Caco-2 (cell line): ENCODE measurements at regions of chr1 and their contacts with region 1.

Region 1: GRCh38 chr1:214551436-214552173 is at the start of gene PTPN14:
- DNase-seq: peak; percentile 96
- H3K4me3 ChIP-seq: peak within 1 kb of the TSS; percentile 94
- H3K4me3 Mint-ChIP-seq: peak within 1 kb of the TSS; percentile 81
- H3K27ac Mint-ChIP-seq: peak within 1 kb of the TSS; percentile 97
- H3K4me1 ChIP-seq: peaks cover 50% of the 10 kb centered on the region
- H3K4me1 Mint-ChIP-seq: peaks cover 36% of the 10 kb centered on the region
- H3K27me3 ChIP-seq: no peaks in the 10 kb centered on the region
- H3K27me3 Mint-ChIP-seq: no peaks in the 10 kb centered on the region
- CTCF ChIP-seq: peak; percentile 36 to 50
- total RNA-seq, gene PTPN14: 103 and 108 TPM in 2 replicates

Region 2: GRCh38 chr1:214281021-214281719 is 270.4 kb before region 1 on chr1 and contains the start of gene SMYD2:
- CTCF ChIA-PET with region 1: no interaction called
- POLR2A ChIA-PET with region 1: no interaction called
- intact Hi-C with region 1: loop called (anchors 5 kb)
- DNase-seq: peak; percentile 82 to 87
- H3K4me3 ChIP-seq: peak within 1 kb of the TSS; percentile 89
- H3K4me3 Mint-ChIP-seq: peak within 1 kb of the TSS; percentile 94
- H3K27ac Mint-ChIP-seq: peak within 1 kb of the TSS; percentile 94
- H3K4me1 ChIP-seq: peaks cover 69% of the 10 kb centered on the region
- H3K4me1 Mint-ChIP-seq: peaks cover 53% of the 10 kb centered on the region
- H3K27me3 ChIP-seq: no peaks in the 10 kb centered on the region
- H3K27me3 Mint-ChIP-seq: no peaks in the 10 kb centered on the region
- CTCF ChIP-seq: no peak
- total RNA-seq, gene SMYD2: 161 and 182 TPM in 2 replicates

Region 3: GRCh38 chr1:214349781-214350180 is 201.8 kb before region 1 on chr1:
- CTCF ChIA-PET with region 1: interaction called, 3 read pairs
- POLR2A ChIA-PET with region 1: interaction called, 19 read pairs
- intact Hi-C with region 1: loop called (anchors 1 kb)
- DNase-seq: peak; percentile 82 to 88
- H3K4me3 ChIP-seq: no peak overlapping the region
- H3K4me3 Mint-ChIP-seq: peak overlapping the region; percentile 70
- H3K27ac Mint-ChIP-seq: peak overlapping the region; percentile 97
- H3K4me1 ChIP-seq: peaks cover 46% of the 10 kb centered on the region
- H3K4me1 Mint-ChIP-seq: peaks cover 33% of the 10 kb centered on the region
- H3K27me3 ChIP-seq: no peaks in the 10 kb centered on the region
- H3K27me3 Mint-ChIP-seq: no peaks in the 10 kb centered on the region
- CTCF ChIP-seq: no peak

Region 4: GRCh38 chr1:214446772-214447556 is 104.6 kb before region 1 on chr1:
- CTCF ChIA-PET with region 1: no interaction called
- POLR2A ChIA-PET with region 1: no interaction called
- intact Hi-C with region 1: loop called (anchors 1 kb)
- DNase-seq: peak; percentile 87 to 89
- H3K4me3 ChIP-seq: peak overlapping the region; percentile 23
- H3K4me3 Mint-ChIP-seq: peak overlapping the region; percentile 65
- H3K27ac Mint-ChIP-seq: peak overlapping the region; percentile 91
- H3K4me1 ChIP-seq: peaks cover 58% of the 10 kb centered on the region
- H3K4me1 Mint-ChIP-seq: peaks cover 44% of the 10 kb centered on the region
- H3K27me3 ChIP-seq: no peaks in the 10 kb centered on the region
- H3K27me3 Mint-ChIP-seq: no peaks in the 10 kb centered on the region
- CTCF ChIP-seq: no peak

Region 5: GRCh38 chr1:214473387-214473786 is 78.2 kb before region 1 on chr1:
- CTCF ChIA-PET with region 1: no interaction called
- POLR2A ChIA-PET with region 1: interaction called, 12 read pairs
- intact Hi-C with region 1: loop called (anchors 5 kb)
- DNase-seq: peak in 1 of 2 experiments; percentile 40
- H3K4me3 ChIP-seq: no peak overlapping the region
- H3K4me3 Mint-ChIP-seq: peak overlapping the region; percentile 31
- H3K27ac Mint-ChIP-seq: peak overlapping the region; percentile 80
- H3K4me1 ChIP-seq: peaks cover 82% of the 10 kb centered on the region
- H3K4me1 Mint-ChIP-seq: peaks cover 62% of the 10 kb centered on the region
- H3K27me3 ChIP-seq: no peaks in the 10 kb centered on the region
- H3K27me3 Mint-ChIP-seq: no peaks in the 10 kb centered on the region
- CTCF ChIP-seq: no peak

Region 6: GRCh38 chr1:214515544-214516429 is 35.8 kb before region 1 on chr1:
- CTCF ChIA-PET with region 1: interaction called, 3 read pairs
- POLR2A ChIA-PET with region 1: interaction called, 18 read pairs
- intact Hi-C with region 1: loop called (anchors 1 kb)
- DNase-seq: no peak
- H3K4me3 ChIP-seq: 0 out of 2 replicates have a peak overlapping the region, but pooled peaks have one; percentile 1
- H3K4me3 Mint-ChIP-seq: peak overlapping the region; percentile 75
- H3K27ac Mint-ChIP-seq: peak overlapping the region; percentile 91
- H3K4me1 ChIP-seq: peaks cover 65% of the 10 kb centered on the region
- H3K4me1 Mint-ChIP-seq: peaks cover 55% of the 10 kb centered on the region
- H3K27me3 ChIP-seq: no peaks in the 10 kb centered on the region
- H3K27me3 Mint-ChIP-seq: no peaks in the 10 kb centered on the region
- CTCF ChIP-seq: no peak

Region 7: DNA sequence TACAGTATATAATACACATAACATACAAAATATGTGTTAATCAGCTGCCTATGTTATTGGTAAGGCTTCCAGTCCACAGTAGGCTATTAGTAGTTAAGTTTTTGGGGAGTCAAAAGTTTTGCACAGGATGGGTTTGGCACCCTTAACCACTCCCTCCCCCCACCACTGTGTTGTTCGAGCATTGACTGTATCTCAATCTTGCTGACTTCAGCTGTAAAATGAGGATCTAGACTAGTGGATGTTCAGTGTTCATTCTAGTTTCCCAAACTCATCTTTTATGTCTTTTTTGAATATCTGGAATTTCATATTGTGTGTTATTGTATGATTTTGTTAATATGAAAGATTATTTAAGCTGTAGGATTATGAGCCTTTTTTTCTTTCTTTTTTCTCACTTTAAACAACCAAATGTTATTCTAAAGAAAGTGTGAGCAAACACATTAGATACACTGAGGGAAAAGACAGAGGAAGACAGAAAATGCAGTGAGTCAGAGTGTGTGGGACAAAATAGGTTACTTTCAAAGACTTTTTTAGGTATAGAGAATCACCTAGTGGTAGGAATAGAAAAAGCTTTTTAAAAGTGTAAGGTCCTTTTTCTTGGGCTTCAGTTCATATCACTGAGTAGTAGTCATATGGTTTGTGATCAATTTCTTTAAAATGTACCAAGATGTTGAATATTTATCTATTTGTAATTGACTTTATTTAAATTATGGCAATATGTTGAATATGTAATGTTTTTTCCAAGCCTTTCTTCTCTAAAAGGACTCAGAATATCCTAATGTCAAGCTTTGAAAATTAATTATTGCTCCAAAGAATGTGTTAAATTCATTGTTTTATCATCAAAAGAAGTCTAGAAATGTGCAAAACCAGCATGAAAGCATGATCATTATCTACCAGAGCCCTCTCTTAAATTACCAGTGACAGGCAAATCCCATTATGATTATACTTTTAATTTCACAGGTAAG is 33.5 kb after region 1 on chr1:
- CTCF ChIA-PET with region 1: interaction called, 11 read pairs
- POLR2A ChIA-PET with region 1: interaction called, 14 read pairs
- intact Hi-C with region 1: loop called (anchors 1 kb)
- DNase-seq: peak in 1 of 2 experiments; percentile 17
- H3K4me3 ChIP-seq: no peak overlapping the region
- H3K4me3 Mint-ChIP-seq: no peak overlapping the region
- H3K27ac Mint-ChIP-seq: no peak overlapping the region
- H3K4me1 ChIP-seq: no peaks in the 10 kb centered on the region; the same call in 1 of the 2 replicates
- H3K4me1 Mint-ChIP-seq: peaks cover 7% of the 10 kb centered on the region
- H3K27me3 ChIP-seq: no peaks in the 10 kb centered on the region
- H3K27me3 Mint-ChIP-seq: no peaks in the 10 kb centered on the region
- CTCF ChIP-seq: peak; percentile 46 to 89